ENCODE measurements at regions of chr2 and their contacts with region 1.

Region 1: DNA sequence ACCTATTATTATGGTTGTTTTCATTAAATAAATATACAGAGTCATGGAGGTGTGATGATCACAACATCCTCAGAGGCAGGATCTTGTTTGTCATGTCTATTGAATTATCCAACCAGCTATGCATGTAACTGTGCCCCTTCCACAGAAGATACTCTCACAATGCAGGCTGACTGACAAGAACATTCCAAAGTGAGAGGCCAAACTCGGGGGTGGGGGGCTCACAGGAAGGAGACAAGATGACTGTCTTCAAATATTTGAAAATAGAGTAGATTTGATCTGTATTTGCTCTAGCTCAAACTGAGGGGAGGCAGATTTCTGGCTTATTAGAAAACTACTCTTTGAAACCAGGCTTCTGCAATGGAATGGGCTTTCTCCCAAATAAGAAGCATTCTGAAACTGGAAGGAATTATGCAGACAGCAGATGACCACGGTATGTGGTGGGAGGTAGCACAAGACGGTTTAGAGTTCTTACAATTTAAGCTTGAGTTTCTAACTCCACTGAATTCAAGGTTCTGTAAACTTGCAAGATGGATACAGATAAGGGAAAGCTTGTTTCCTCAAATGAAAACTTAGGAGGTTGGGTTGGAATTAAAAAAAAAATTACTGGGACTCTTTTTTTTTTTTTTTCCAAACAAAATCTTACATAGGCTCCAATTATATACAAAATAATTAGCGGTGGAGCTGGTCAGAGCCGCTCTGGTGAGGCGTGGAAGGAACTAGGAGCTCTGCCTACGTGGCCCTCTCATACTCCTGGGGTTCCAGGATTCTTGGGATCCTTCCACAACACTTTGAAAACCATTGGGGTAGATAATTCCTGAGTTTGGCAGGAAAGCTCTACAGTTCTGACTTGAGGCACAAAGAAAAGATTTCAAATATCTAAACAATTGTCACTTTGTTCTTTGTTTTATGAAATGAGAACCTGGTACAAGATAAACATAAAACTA is 79.3 kb downstream of the PLA2R1 start:
- DNase-seq: no peak
- H3K4me3 ChIP-seq: no peak overlapping the region
- H3K27ac ChIP-seq: peak overlapping the region in 1 of 2 experiments; percentile 50; a peak in 2 of 4 replicates
- H3K4me1 ChIP-seq: no peaks in the 10 kb centered on the region; a peak in 1 of 4 replicates
- H3K27me3 ChIP-seq: peaks cover 6% of the 10 kb centered on the region; the same call in 1 of the 2 replicates
- CTCF ChIP-seq: no peak
- EP300 ChIP-seq: no peak
- RAD21 ChIP-seq: no peak

Region 2: GRCh38 chr2:159968279-159968900 is 14.7 kb before region 1 on chr2:
- CTCF ChIA-PET with region 1: interaction called, 10 read pairs
- POLR2A ChIA-PET with region 1: no interaction called
- DNase-seq: peak; percentile 39
- H3K4me3 ChIP-seq: no peak overlapping the region; a peak in 1 of 4 replicates
- H3K27ac ChIP-seq: no peak overlapping the region
- H3K4me1 ChIP-seq: no peaks in the 10 kb centered on the region
- H3K27me3 ChIP-seq: no peaks in the 10 kb centered on the region
- CTCF ChIP-seq: peak; percentile 71
- EP300 ChIP-seq: no peak
- RAD21 ChIP-seq: peak; percentile 92